Endothelial cell of umbilical vein (primary cell): ENCODE measurements at regions of chr16 and their contacts with region 1.

Region 1: DNA sequence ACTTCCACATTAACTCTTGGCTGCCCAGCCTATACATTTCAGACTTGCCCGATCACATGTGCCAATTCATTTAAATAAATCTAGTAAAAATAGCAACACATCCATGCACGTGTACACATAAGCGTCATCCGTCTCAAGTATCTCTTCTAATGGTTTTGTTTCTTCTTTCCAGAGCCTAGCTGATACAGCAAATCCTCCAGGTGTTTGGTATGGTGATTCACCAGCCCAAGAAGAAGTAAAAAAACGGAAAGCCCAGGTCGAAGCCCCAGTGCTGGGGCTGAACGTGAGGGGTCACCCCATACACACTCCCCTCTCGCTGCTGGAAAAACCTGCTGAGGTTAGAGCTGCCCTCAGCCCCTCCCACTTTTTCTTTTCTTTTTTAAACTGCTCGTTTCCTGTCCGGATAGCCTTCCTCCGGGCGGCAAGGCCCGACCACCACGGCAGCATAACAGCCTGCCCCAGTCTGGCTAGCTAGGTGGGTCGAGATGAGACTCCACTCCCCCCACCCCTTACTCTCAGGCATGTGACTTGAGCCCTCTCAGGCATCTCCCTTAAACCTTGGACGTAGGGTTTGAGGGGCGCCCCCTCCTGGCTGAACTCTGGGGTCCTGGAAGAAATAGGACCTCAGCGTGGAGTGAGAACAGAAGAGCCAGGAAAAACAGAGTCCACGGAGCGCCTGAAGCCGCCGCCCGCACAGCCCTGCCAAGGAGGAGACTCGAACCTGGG is 13.9 kb upstream of the OR1F1 start:
- DNase-seq: no peak
- H3K4me3 ChIP-seq: no peak overlapping the region
- H3K27ac ChIP-seq: no peak overlapping the region
- H3K4me1 ChIP-seq: peaks cover 22% of the 10 kb centered on the region
- H3K27me3 ChIP-seq: peaks cover 27 to 31% of the 10 kb centered on the region in 2 experiments
- CTCF ChIP-seq: peak; percentile 54 to 55
- POLR2A ChIP-seq: no peak

Region 2: GRCh38 chr16:3029537-3030402 is 144.3 kb before region 1 on chr16:
- CTCF ChIA-PET with region 1: interaction called, 14 read pairs
- POLR2A ChIA-PET with region 1: no interaction called
- dilution Hi-C with region 1: no loop called
- intact Hi-C with region 1: no loop called
- DNase-seq: no peak
- H3K4me3 ChIP-seq: no peak overlapping the region
- H3K27ac ChIP-seq: no peak overlapping the region
- H3K4me1 ChIP-seq: no peaks in the 10 kb centered on the region
- H3K27me3 ChIP-seq: peaks cover 36 to 41% of the 10 kb centered on the region in 2 experiments
- CTCF ChIP-seq: no peak
- POLR2A ChIP-seq: no peak

Region 3: DNA sequence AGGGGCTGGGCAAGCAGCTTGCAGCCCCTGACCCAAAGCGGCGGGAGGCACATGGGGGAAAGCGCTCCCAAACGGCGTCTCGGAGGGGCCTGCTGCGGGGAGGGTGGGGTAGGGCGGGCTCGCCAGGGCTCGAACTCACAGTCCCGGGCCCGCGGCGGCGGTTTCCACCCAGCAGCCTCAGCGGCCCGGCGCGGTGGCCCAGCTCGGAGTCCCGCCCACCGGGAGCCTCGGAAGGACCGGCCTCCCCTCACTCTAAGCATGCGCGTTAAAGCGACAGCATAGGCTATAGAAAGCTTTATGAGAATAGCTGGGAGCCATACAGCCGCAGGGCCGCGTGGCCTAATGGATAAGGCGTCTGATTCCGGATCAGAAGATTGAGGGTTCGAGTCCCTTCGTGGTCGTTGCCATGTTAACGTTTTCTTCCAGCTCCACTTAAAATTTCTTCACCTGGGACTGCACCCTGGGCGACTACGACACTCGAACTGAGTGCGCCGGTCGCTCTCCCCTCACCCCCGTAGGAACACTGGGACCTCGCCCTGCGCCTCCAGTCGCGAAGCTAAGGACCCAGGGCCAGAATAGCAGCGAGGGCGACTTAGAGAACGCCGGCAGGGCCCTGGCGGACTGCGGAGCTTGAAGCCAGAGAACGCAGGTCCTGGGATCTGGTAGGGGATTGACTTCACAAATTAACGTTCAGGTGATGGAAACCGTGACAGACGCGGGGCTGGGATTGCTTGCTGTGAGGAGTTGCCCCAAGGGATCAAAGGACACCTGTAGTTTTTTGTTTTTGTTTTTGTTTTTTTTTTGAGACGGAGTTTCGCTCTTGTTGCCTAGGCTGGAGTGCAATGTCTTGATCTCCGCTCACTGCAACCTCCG is 23.5 kb before region 1 on chr16:
- CTCF ChIA-PET with region 1: interaction called, 11 read pairs
- POLR2A ChIA-PET with region 1: no interaction called
- dilution Hi-C with region 1: no loop called
- intact Hi-C with region 1: loop called (anchors 1 kb)
- DNase-seq: peak; percentile 98
- H3K4me3 ChIP-seq: peak overlapping the region; percentile 68 to 80 (median 69)
- H3K27ac ChIP-seq: peak overlapping the region; percentile 37
- H3K4me1 ChIP-seq: peaks cover 10% of the 10 kb centered on the region
- H3K27me3 ChIP-seq: no peaks in the 10 kb centered on the region
- CTCF ChIP-seq: no peak
- POLR2A ChIP-seq: peak; percentile 33